ENCODE measurements at regions of chr6 and their contacts with region 1.

Region 1: GRCh38 chr6:39189915-39190544 is 39.2 kb downstream of the KCNK5 start:
- DNase-seq: peak; percentile 27 to 79
- H3K4me3 ChIP-seq: no peak overlapping the region
- H3K27ac ChIP-seq: no peak overlapping the region
- H3K4me1 ChIP-seq: no peaks in the 10 kb centered on the region; a peak in 2 of 7 replicates
- H3K27me3 ChIP-seq: no peaks in the 10 kb centered on the region
- CTCF ChIP-seq: peak in 2 of 3 experiments; percentile 84 to 89; a peak in 3 of 4 replicates
- EP300 ChIP-seq: no peak
- POLR2A ChIP-seq: no peak
- RAD21 ChIP-seq: peak; percentile 78 to 84

Region 2: GRCh38 chr6:39005774-39006173 is 184.3 kb before region 1 on chr6:
- CTCF ChIA-PET with region 1: no interaction called
- POLR2A ChIA-PET with region 1: no interaction called
- DNase-seq: no peak
- H3K4me3 ChIP-seq: no peak overlapping the region
- H3K27ac ChIP-seq: no peak overlapping the region
- H3K4me1 ChIP-seq: no peaks in the 10 kb centered on the region
- H3K27me3 ChIP-seq: no peaks in the 10 kb centered on the region; a peak in 1 of 7 replicates
- CTCF ChIP-seq: no peak
- EP300 ChIP-seq: no peak
- POLR2A ChIP-seq: no peak
- RAD21 ChIP-seq: no peak

Region 3: DNA sequence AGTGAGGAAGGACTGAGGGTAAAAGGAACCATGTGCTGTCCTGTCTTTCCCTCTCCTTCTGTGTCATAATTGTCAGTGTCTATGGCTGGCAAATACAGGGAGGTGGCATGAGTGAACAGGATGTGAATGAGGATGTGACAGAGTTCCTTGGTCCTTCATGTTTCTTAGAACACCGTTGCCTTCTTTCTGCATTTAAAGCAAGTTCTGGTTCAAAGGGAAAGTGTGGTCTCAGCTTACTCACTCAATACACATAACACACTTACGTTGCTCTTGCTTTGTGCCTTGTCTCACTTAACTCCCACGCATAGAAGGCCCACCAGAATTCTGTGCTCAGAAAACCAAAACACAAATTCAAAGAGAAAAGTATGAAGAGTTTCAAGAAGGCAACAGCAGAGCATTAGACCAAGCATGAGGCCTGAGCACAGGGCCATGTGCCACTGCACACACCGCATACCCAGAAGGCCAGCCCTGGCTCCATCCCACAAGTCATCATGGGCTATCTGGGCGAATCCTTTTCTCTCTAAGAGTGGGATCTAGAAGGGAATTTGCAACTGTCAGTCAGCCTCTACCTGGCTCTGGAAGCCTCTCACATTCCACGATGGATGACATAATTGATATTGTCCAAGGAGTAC is 36.1 kb before region 1 on chr6:
- CTCF ChIA-PET with region 1: interaction called, 11 read pairs
- POLR2A ChIA-PET with region 1: no interaction called
- DNase-seq: no peak
- H3K4me3 ChIP-seq: no peak overlapping the region
- H3K27ac ChIP-seq: no peak overlapping the region
- H3K4me1 ChIP-seq: no peaks in the 10 kb centered on the region
- H3K27me3 ChIP-seq: no peaks in the 10 kb centered on the region
- CTCF ChIP-seq: no peak
- EP300 ChIP-seq: no peak
- POLR2A ChIP-seq: no peak
- RAD21 ChIP-seq: no peak

Region 4: GRCh38 chr6:39239527-39240154 is 49.6 kb after region 1 on chr6:
- CTCF ChIA-PET with region 1: interaction called, 836 read pairs
- POLR2A ChIA-PET with region 1: no interaction called
- DNase-seq: no peak
- H3K4me3 ChIP-seq: no peak overlapping the region
- H3K27ac ChIP-seq: no peak overlapping the region
- H3K4me1 ChIP-seq: peaks cover 0 to 2% (median 1%) of the 10 kb centered on the region in 4 experiments; a peak in 3 of 7 replicates
- H3K27me3 ChIP-seq: no peaks in the 10 kb centered on the region
- CTCF ChIP-seq: peak in 2 of 3 experiments; percentile 17 to 19; a peak in 2 of 4 replicates
- EP300 ChIP-seq: no peak
- POLR2A ChIP-seq: no peak
- RAD21 ChIP-seq: peak in 1 of 2 experiments; percentile 32; a peak in 3 of 4 replicates

Region 5: DNA sequence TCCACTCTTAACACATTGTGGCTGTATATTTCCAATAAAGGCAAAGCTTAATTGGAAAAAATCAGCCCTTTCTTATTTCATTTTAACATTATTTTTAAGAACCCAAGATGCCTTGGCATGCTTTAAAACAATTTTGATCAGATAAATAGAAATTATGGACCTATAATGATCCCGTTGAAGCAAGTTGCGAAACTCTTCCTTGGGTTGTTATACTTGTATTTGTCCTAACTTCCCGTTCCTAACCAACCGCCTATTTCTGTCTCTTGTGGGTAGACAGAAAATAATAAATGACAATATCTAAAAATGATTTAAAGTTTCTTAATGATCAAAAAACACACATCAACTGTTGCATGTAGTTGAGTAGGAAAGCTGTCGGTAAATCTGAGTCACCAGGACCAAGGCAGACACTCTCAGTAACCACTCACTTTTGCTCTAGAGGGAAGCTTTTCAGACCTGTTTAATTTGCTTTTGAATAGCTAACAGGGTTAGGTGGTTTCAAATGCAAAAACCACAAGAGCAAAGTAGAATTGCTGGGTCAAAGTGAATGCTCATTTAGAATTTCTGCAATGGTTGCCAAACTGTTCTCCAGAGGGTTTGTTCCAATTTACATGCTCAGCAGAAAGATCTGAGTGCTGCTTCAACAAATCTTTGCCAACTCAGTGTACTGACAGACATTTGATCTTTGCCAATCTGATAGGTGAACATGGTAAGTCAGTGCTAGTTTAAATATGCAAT is 73.4 kb after region 1 on chr6:
- CTCF ChIA-PET with region 1: interaction called, 15 read pairs
- POLR2A ChIA-PET with region 1: no interaction called
- DNase-seq: peak in 1 of 2 experiments; percentile 25
- H3K4me3 ChIP-seq: peak overlapping the region in 1 of 4 experiments; percentile 43; a peak in 1 of 8 replicates
- H3K27ac ChIP-seq: peak overlapping the region; percentile 47; the same call in 1 of the 2 replicates
- H3K4me1 ChIP-seq: peaks cover 0 to 10% (median 7%) of the 10 kb centered on the region in 4 experiments; a peak in 5 of 7 replicates
- H3K27me3 ChIP-seq: no peaks in the 10 kb centered on the region
- CTCF ChIP-seq: no peak
- EP300 ChIP-seq: no peak
- POLR2A ChIP-seq: no peak
- RAD21 ChIP-seq: 0 out of 4 replicates have a peak, but pooled peaks of 1 of the 2 experiments have one; percentile 2

Region 6: DNA sequence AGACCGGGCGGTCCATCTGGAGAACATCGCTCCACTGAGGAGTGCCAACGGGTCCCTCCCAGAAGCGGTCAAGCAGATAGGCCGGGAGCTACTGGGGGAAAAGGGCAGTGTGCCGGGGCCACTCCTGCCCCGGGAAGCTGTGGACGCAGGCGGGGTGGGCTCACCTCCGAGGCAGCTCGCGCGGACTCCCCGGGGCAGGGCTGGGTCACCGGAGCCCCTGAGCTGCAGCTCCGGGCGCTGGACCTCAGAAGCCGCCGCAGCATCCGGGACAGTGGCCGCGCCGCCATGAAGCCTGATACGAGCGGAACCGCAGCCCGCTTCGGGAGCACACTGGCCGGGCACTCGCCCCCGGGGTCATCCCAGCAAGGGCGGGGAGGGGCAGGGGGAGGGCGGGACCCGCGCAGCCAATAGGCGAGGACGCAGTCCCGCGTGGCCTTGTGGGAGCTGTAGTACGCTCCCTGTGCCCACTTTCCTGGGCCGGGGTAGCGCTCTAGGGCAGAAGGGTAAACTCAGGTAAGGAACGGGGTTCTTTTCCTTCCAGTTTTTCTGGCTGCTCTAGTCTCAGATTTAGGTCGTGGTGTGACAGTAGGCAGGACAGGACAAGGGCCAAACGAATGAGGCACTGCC is 744.2 kb after region 1 on chr6 and contains the start of gene MOCS1:
- CTCF ChIA-PET with region 1: no interaction called
- POLR2A ChIA-PET with region 1: no interaction called
- DNase-seq: peak; percentile 56 to 85
- H3K4me3 ChIP-seq: peak within 1 kb of the TSS; percentile 54 to 81 (median 76)
- H3K27ac ChIP-seq: no peak within 1 kb of the TSS
- H3K4me1 ChIP-seq: peaks cover 3 to 11% (median 8%) of the 10 kb centered on the region in 4 experiments; a peak in 6 of 7 replicates
- H3K27me3 ChIP-seq: no peaks in the 10 kb centered on the region; a peak in 1 of 7 replicates
- CTCF ChIP-seq: no peak
- EP300 ChIP-seq: no peak
- POLR2A ChIP-seq: peak in 1 of 2 experiments; percentile 82; a peak in 2 of 3 replicates
- RAD21 ChIP-seq: no peak
- total RNA-seq, gene MOCS1: 18.5 and 19.7 TPM in 2 replicates

Measured in H1 (cell line).